CD8-positive, alpha-beta T cell (primary cell): ENCODE measurements at regions of chrX and their contacts with region 1.

Region 1: DNA sequence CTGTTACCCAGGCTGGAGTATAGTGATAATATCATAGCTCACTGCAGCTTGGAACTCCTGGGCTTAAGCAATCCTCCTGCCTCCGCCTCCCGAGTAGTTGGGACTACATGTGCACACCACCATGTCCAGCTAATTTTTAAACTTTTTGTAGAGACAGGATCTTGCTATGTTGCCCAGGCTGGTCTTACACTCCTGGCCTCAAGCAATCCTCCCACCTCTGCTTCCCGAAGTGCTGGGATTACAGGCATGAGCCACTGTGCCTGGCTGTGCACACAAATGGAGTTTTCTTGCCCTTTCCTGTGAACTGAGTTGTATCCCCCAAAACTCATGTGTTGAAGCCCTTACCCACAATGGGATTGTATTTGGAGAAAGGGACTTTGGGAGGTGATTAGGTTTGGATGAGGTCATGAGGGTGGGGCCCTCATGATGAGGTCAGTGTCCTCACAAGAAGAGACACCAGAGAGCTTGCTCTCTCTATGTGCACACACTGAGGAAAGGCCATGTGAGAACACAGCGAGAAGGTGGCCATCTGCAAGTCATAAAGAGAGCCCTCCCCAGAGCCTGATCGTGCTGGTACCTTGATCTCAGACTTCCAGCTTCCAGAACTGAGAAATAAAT is 40.1 kb downstream of the DDX3X start:
- DNase-seq: no peak
- ATAC-seq: no peak
- H3K4me3 ChIP-seq: no peak overlapping the region
- H3K4me3 Mint-ChIP-seq: no peak overlapping the region
- H3K27ac ChIP-seq: no peak overlapping the region
- H3K27ac Mint-ChIP-seq: no peak overlapping the region
- H3K4me1 ChIP-seq: no peaks in the 10 kb centered on the region
- H3K4me1 Mint-ChIP-seq: no peaks in the 10 kb centered on the region
- H3K27me3 ChIP-seq: no peaks in the 10 kb centered on the region
- H3K27me3 Mint-ChIP-seq: no peaks in the 10 kb centered on the region
- CTCF ChIP-seq: no peak

Region 2: GRCh38 chrX:41406211-41406610 is 32.1 kb after region 1 on chrX:
- CTCF ChIA-PET with region 1: no interaction called
- POLR2A ChIA-PET with region 1: no interaction called
- intact Hi-C with region 1: loop called in 1 of 2 experiments (anchors 2 kb)
- DNase-seq: no peak
- ATAC-seq: no peak
- H3K4me3 ChIP-seq: no peak overlapping the region
- H3K4me3 Mint-ChIP-seq: no peak overlapping the region
- H3K27ac ChIP-seq: no peak overlapping the region
- H3K27ac Mint-ChIP-seq: no peak overlapping the region
- H3K4me1 ChIP-seq: no peaks in the 10 kb centered on the region
- H3K4me1 Mint-ChIP-seq: no peaks in the 10 kb centered on the region
- H3K27me3 ChIP-seq: no peaks in the 10 kb centered on the region
- H3K27me3 Mint-ChIP-seq: no peaks in the 10 kb centered on the region
- CTCF ChIP-seq: no peak